CD4-positive, alpha-beta memory T cell (primary cell): ENCODE measurements at regions of chr3 and their contacts with region 1.

Region 1: GRCh38 chr3:167882067-167882667 is 146.6 kb downstream of the SERPINI1 start:
- DNase-seq: peak in 4 of 5 donors; percentile 24 to 47 (median 34)
- H3K4me3 ChIP-seq: no peak overlapping the region
- H3K4me3 Mint-ChIP-seq: peak overlapping the region in 2 of 8 donors; percentile 8 to 40
- H3K27ac ChIP-seq: no peak overlapping the region
- H3K27ac Mint-ChIP-seq: no peak overlapping the region
- H3K4me1 ChIP-seq: peaks cover 3% of the 10 kb centered on the region
- H3K4me1 Mint-ChIP-seq: peaks cover 0 to 4% (median 2%) of the 10 kb centered on the region in 4 donors
- H3K27me3 ChIP-seq: no peaks in the 10 kb centered on the region
- H3K27me3 Mint-ChIP-seq: peaks cover 5 to 8% of the 10 kb centered on the region in 2 donors

Region 2: DNA sequence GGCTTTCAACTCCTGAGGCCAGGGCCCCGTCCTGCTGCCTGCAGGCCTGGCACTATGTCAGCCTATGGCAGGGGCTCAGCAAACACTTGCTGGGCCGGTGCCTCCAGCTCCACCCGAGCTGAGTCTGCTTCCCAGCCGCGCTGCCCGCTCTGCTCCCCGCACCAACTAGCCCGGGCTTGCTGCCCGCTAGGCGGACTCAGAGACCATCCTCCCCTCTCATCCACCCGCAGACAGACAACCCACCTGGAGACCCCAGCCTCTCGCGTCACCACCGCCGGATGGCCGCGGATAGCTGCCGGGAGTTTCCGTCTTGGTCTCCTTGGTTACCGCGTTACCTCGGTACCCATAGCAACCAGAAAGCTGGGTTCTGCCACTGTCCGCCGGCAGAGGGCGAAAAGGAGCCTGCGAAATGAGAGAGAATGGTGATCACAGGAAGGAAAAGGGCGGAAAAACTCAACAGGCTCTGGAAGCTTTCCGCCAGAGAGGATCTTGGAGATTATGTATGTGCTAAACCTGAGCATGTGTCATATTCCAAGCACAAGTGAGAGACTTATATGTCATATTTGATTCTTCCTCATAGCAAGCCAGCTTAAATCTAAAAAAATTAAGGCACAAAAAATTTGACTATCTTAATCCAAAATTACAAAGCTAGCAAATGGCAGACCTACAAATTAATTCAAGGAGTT is 502.0 kb before region 1 on chr3 and contains the start of gene ZBBX:
- CTCF ChIA-PET with region 1: interaction called, 22 read pairs
- POLR2A ChIA-PET with region 1: no interaction called
- intact Hi-C with region 1: loop called (anchors 1 kb)
- DNase-seq: peak; percentile 78 to 82 (median 81)
- H3K4me3 ChIP-seq: no peak within 1 kb of the TSS
- H3K4me3 Mint-ChIP-seq: peak within 1 kb of the TSS; percentile 70 to 85 (median 80)
- H3K27ac ChIP-seq: no peak within 1 kb of the TSS
- H3K27ac Mint-ChIP-seq: peak within 1 kb of the TSS in 6 of 7 donors; percentile 67 to 92 (median 85)
- H3K4me1 ChIP-seq: peaks cover 3% of the 10 kb centered on the region
- H3K4me1 Mint-ChIP-seq: peaks cover 5 to 15% (median 7%) of the 10 kb centered on the region in 4 donors
- H3K27me3 ChIP-seq: no peaks in the 10 kb centered on the region
- H3K27me3 Mint-ChIP-seq: peaks cover 2 to 7% of the 10 kb centered on the region in 2 donors
- total RNA-seq, gene ZBBX: not detected

Region 3: GRCh38 chr3:167895684-167896083 is 13.5 kb after region 1 on chr3:
- CTCF ChIA-PET with region 1: interaction called, 22 read pairs
- POLR2A ChIA-PET with region 1: no interaction called
- intact Hi-C with region 1: no loop called
- DNase-seq: no peak
- H3K4me3 ChIP-seq: no peak overlapping the region
- H3K4me3 Mint-ChIP-seq: no peak overlapping the region
- H3K27ac ChIP-seq: no peak overlapping the region
- H3K27ac Mint-ChIP-seq: no peak overlapping the region
- H3K4me1 ChIP-seq: no peaks in the 10 kb centered on the region
- H3K4me1 Mint-ChIP-seq: no peaks in the 10 kb centered on the region
- H3K27me3 ChIP-seq: no peaks in the 10 kb centered on the region
- H3K27me3 Mint-ChIP-seq: no peaks in the 10 kb centered on the region